ENCODE measurements at regions of chr2 and their contacts with region 1.

Region 1: GRCh38 chr2:96485751-96486651 is 19.2 kb downstream of the NEURL3 start:
- DNase-seq: peak; percentile 88
- H3K4me3 Mint-ChIP-seq: peak overlapping the region; percentile 92
- H3K27ac Mint-ChIP-seq: peak overlapping the region; percentile 96
- H3K4me1 Mint-ChIP-seq: peaks cover 63% of the 10 kb centered on the region
- H3K27me3 Mint-ChIP-seq: peaks cover 5% of the 10 kb centered on the region

Region 2: GRCh38 chr2:96241900-96242611 is 243.9 kb before region 1 on chr2:
- intact Hi-C with region 1: loop called (anchors 1 kb)
- DNase-seq: peak; percentile 62
- H3K4me3 Mint-ChIP-seq: peak overlapping the region; percentile 63
- H3K27ac Mint-ChIP-seq: peak overlapping the region; percentile 87
- H3K4me1 Mint-ChIP-seq: peaks cover 52% of the 10 kb centered on the region
- H3K27me3 Mint-ChIP-seq: no peaks in the 10 kb centered on the region

Region 3: GRCh38 chr2:96336104-96336775 is 149.8 kb before region 1 on chr2:
- intact Hi-C with region 1: loop called (anchors 2 kb)
- DNase-seq: no peak
- H3K4me3 Mint-ChIP-seq: peak overlapping the region; percentile 95
- H3K27ac Mint-ChIP-seq: peak overlapping the region; percentile 93
- H3K4me1 Mint-ChIP-seq: peaks cover 67% of the 10 kb centered on the region
- H3K27me3 Mint-ChIP-seq: no peaks in the 10 kb centered on the region

Region 4: DNA sequence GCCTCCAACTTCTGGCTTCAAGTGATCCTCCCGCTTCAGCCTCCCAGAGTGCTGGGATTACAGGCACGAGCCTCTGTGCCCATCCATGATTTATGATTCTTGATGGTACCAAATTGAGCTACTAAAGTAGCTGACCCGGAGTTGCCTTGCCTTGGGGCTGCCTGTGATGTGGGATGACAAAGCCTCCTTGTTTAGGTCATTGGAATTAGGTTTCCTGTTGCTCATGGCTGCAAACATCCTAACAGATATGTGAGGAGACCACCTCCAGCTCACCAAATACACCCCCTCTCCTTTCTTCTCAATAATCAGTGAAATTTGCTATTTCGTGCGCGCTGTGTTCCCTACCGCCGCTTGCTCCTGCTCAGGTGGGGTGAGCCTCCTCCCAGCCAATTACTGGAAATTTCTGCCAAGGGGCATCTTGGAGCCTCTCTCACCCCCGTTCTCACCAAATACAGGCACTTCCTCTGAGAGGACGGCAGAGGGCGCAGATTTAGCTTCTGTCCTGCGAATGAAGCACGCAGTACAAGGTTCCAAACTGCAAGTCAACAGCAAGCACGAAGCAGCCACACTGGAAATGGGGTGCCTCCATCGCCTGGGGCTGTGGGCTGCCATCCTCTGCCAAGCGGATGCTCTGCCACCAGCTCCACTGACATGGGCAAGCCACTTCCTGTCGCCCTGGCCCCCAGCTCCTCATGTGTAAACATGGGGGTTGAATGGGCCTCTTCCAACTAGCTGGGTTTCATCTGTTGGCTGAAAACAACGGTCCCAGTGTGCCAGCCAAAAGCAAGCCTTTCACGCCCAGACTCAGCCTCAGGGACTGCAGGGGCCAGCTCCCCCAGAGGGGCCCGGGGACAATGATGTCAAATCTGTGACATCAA is 78.7 kb before region 1 on chr2:
- intact Hi-C with region 1: loop called (anchors 1 kb)
- DNase-seq: peak; percentile 58
- H3K4me3 Mint-ChIP-seq: no peak overlapping the region
- H3K27ac Mint-ChIP-seq: peak overlapping the region; percentile 72
- H3K4me1 Mint-ChIP-seq: peaks cover 22% of the 10 kb centered on the region
- H3K27me3 Mint-ChIP-seq: peaks cover 5% of the 10 kb centered on the region

Region 5: DNA sequence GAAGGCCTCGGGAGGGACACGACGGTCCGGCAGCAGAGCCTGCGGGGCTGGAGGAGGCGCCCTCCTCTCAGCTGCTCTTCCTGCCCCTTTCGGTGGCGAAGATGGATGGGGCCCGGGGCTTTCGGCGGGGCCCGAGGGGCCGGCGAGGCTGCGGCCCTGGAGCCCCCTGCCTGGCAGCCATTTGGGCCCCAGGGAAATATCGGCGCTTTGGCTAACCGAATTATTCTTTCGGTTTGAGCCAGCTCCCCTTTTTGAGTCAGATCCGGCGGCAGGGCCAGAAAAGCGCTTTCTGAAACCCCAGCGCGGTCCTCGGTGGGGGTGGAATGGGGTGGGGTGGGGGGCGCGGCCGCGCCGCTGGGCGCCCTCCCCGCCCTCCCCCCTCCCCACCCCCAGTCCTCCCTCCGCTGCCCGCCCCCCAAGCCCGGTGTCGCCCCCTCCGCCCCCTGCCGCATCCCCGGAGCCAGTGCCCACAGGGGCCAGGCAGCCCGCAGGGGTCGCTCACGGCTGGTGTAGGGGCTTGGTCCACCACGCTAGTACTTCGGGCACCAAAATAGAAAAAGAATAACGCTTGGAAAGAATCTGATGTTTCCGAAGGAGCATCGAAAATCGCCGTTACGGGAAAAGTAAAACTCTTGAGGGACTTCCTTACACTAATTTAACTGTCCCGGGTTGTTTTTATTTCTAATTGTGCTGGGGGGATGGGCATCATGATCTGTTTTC is 41.4 kb after region 1 on chr2:
- intact Hi-C with region 1: loop called (anchors 1 kb)
- DNase-seq: peak; percentile 70
- H3K4me3 Mint-ChIP-seq: peak overlapping the region; percentile 69
- H3K27ac Mint-ChIP-seq: peak overlapping the region; percentile 97
- H3K4me1 Mint-ChIP-seq: peaks cover 93% of the 10 kb centered on the region
- H3K27me3 Mint-ChIP-seq: no peaks in the 10 kb centered on the region